ENCODE measurements at regions of chr18 and their contacts with region 1.

Region 1: GRCh38 chr18:4004183-4004829 is 450.8 kb downstream of the DLGAP1 start:
- DNase-seq: no peak
- H3K4me3 Mint-ChIP-seq: peak overlapping the region; percentile 9
- H3K27ac Mint-ChIP-seq: peak overlapping the region; percentile 61
- H3K4me1 Mint-ChIP-seq: peaks cover 19% of the 10 kb centered on the region
- H3K27me3 Mint-ChIP-seq: no peaks in the 10 kb centered on the region
- CTCF ChIP-seq: no peak

Region 2: GRCh38 chr18:4068552-4069158 is 64.3 kb after region 1 on chr18:
- CTCF ChIA-PET with region 1: no interaction called
- intact Hi-C with region 1: loop called (anchors 1 kb)
- DNase-seq: peak; percentile 54
- H3K4me3 Mint-ChIP-seq: no peak overlapping the region
- H3K27ac Mint-ChIP-seq: no peak overlapping the region
- H3K4me1 Mint-ChIP-seq: no peaks in the 10 kb centered on the region
- H3K27me3 Mint-ChIP-seq: no peaks in the 10 kb centered on the region
- CTCF ChIP-seq: peak; percentile 50